PC-9 (cell line): ENCODE measurements at regions of chr17 and their contacts with region 1.

Region 1: DNA sequence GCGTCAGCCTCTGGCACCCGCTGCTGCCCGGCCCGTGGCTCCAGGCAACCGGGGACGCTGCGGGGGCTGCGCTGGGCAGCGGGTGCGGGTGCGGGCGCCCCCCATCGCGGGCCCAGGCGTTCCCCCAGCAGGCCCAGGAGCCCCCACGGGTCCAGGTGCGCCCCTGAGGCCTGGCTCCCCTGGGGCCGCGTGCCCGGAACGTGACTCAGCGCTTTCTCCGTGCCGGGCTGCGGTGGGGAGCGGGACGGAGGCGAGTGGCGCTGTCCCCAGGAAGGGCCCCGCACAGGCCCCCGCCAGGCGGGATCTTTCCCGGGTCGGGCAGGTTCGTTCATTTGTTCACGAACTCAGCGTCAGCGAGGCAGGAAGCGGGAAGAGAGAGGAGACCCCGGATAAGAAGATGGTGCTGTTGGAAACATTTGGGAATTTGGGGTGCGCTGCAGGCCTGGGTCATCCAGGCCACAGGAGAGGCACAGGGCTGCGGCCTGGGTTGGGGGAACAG is 18.4 kb upstream of the EXOC7 start:
- DNase-seq: no peak
- H3K4me3 ChIP-seq: no peak overlapping the region
- H3K27ac ChIP-seq: no peak overlapping the region
- H3K4me1 ChIP-seq: no peaks in the 10 kb centered on the region
- H3K27me3 ChIP-seq: no peaks in the 10 kb centered on the region
- CTCF ChIP-seq: no peak

Region 2: GRCh38 chr17:75959051-75959838 is 162.7 kb before region 1 on chr17:
- CTCF ChIA-PET with region 1: interaction called, 11 read pairs
- POLR2A ChIA-PET with region 1: no interaction called
- intact Hi-C with region 1: no loop called
- DNase-seq: no peak
- H3K4me3 ChIP-seq: no peak overlapping the region
- H3K27ac ChIP-seq: no peak overlapping the region
- H3K4me1 ChIP-seq: no peaks in the 10 kb centered on the region
- H3K27me3 ChIP-seq: no peaks in the 10 kb centered on the region
- CTCF ChIP-seq: no peak

Region 3: DNA sequence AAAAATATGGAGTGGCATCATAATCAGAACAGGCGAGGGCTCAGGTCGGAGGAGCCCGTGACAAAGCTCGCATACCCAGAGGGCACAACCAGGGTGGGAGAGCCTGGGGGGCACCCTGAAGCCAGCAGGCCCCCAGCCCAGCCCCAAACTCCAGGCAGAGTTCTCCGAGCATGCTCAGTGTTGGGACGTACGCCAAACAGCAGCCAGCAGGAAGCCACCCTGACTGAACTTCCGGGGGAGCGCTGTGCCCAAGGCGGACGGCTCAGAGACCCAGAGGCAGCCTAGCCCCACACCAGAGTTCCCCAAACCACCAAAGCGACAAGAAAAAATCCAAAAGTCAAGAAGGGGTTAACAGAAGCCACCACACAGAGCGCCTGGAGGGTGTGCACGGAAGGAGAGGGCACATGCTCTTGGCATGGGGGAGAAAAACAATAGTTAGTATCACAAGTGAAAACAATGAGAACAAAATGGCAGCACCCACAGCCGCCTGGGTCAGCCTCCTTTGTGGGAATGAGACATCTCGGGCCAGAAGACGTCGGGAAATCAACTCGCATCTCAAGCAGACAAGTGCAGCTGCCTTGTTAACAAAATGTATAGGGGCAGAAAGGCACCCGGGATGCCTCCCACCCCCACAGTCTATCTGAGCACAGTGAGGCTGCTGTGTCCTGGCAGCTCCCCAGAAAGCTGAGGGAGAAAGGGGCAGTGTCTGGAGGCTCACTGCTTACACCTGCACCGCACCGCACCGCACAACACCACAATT is 30.3 kb before region 1 on chr17:
- CTCF ChIA-PET with region 1: no interaction called
- POLR2A ChIA-PET with region 1: no interaction called
- intact Hi-C with region 1: no loop called
- DNase-seq: no peak
- H3K4me3 ChIP-seq: no peak overlapping the region
- H3K27ac ChIP-seq: no peak overlapping the region
- H3K4me1 ChIP-seq: no peaks in the 10 kb centered on the region
- H3K27me3 ChIP-seq: no peaks in the 10 kb centered on the region
- CTCF ChIP-seq: no peak

Region 4: DNA sequence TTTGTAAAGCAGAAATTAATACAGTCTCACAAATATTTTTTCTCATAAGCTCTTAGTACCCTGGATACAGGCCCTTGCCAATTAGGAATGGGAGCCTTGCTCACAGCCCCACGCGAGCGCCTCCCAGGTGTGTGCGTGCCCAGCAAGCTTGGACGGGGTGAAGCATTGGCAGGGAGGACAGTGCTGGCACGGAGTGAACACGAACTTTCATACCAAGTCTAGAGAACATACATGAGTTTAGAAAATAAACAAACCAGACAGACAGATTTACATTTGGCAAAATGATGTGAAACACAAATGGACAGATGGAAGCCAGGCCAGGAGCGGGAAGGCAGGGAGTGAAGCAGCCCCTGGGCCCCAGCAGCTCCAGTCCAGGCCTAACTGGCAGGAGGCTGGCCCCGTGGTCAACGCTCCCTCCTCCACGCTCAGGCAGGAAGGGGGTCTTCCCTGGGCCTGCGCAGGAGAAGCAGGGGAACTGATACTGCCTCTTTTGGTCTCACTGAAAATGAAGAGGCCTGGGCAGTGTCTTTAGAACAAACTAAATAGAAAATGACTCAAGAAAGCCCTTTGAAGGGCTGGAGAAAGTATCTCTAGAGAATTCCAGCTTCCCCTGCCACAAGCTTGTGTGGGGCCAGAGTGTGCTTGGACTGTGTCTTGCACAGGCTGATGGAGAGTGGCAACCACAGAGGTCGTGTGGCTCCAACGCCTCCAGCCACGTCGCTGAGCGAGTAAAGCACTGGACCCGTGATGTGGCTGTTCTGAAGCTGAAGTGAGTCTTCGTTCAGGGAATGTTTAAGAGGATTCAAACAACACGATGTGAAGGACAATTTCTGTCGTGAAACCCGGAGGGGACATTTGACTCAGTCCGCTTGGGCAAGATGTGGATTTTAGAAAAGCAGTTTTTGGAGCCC is 29.0 kb after region 1 on chr17:
- CTCF ChIA-PET with region 1: interaction called, 16 read pairs
- POLR2A ChIA-PET with region 1: interaction called, 7 read pairs
- intact Hi-C with region 1: no loop called
- DNase-seq: no peak
- H3K4me3 ChIP-seq: no peak overlapping the region
- H3K27ac ChIP-seq: no peak overlapping the region
- H3K4me1 ChIP-seq: no peaks in the 10 kb centered on the region
- H3K27me3 ChIP-seq: no peaks in the 10 kb centered on the region
- CTCF ChIP-seq: no peak

Region 5: GRCh38 chr17:76182016-76182764 is 60.2 kb after region 1 on chr17:
- CTCF ChIA-PET with region 1: interaction called, 5 read pairs
- POLR2A ChIA-PET with region 1: interaction called, 13 read pairs
- intact Hi-C with region 1: loop called (anchors 1 kb)
- DNase-seq: peak; percentile 67 to 85
- H3K4me3 ChIP-seq: no peak overlapping the region
- H3K27ac ChIP-seq: no peak overlapping the region
- H3K4me1 ChIP-seq: 0 out of 2 replicates have a peak, but pooled peaks cover 5% of the 10 kb centered on the region
- H3K27me3 ChIP-seq: no peaks in the 10 kb centered on the region
- CTCF ChIP-seq: peak; percentile 83

Region 6: DNA sequence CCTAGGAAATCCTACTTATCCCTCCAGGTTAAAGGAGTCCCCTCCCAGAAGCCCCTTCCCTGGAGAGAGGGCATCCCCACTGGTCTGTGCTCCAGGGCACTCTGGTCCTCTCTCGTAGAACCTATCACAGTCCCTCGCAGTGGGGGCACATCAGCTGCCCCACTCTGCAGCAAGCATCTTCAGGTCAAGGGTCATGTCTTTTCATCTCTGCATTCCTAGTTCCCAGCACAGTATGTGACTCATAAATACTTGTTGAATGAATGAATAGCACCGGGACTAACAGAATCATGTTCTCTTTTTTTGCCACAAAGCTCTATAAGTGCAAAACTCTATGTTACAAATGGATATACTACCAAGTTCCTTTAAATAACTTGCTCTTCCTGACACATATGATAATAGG is 82.3 kb after region 1 on chr17:
- CTCF ChIA-PET with region 1: interaction called, 10 read pairs
- POLR2A ChIA-PET with region 1: no interaction called
- intact Hi-C with region 1: no loop called
- DNase-seq: peak in 1 of 2 experiments; percentile 58
- H3K4me3 ChIP-seq: no peak overlapping the region
- H3K27ac ChIP-seq: no peak overlapping the region
- H3K4me1 ChIP-seq: peaks cover 14% of the 10 kb centered on the region
- H3K27me3 ChIP-seq: no peaks in the 10 kb centered on the region
- CTCF ChIP-seq: no peak

Region 7: GRCh38 chr17:76278952-76279741 is 157.2 kb after region 1 on chr17:
- CTCF ChIA-PET with region 1: interaction called, 5 read pairs
- POLR2A ChIA-PET with region 1: no interaction called
- intact Hi-C with region 1: loop called (anchors 1 kb)
- DNase-seq: peak; percentile 47 to 83
- H3K4me3 ChIP-seq: no peak overlapping the region
- H3K27ac ChIP-seq: no peak overlapping the region
- H3K4me1 ChIP-seq: peaks cover 15% of the 10 kb centered on the region
- H3K27me3 ChIP-seq: no peaks in the 10 kb centered on the region
- CTCF ChIP-seq: peak; percentile 94

Region 8: DNA sequence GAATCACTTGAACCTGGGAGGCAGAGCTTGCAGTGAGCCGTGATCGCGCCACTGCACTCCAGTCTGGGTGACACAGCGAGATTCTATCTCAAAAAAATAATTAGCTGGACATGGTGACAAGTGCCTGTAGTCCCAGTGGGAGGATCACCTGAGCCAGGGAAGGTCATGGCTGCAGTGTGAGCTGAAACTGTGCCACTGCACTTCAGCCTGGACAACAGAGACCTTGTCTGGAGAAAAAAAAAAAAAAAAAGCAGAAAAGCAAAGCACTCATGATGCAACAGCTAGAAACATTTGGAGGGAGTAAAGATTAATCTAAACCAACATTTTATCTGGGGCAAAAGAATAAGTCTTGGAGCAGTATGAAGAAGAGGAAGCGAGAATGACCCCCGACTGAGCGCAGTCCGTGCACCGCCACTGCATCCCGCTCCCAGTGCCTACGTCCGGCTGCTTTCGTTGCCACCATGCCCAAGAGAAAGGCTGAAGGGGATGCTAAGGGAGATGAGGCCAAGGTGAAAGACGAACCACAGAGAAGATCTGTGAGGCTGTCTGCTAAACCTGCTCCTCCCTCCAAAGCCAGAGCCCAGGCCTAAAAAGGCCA is 223.5 kb after region 1 on chr17:
- CTCF ChIA-PET with region 1: no interaction called
- POLR2A ChIA-PET with region 1: no interaction called
- intact Hi-C with region 1: no loop called
- DNase-seq: no peak
- H3K4me3 ChIP-seq: no peak overlapping the region
- H3K27ac ChIP-seq: peak overlapping the region; percentile 44; the same call in 1 of the 2 replicates
- H3K4me1 ChIP-seq: no peaks in the 10 kb centered on the region
- H3K27me3 ChIP-seq: no peaks in the 10 kb centered on the region
- CTCF ChIP-seq: no peak